Activated CD4-positive, alpha-beta memory T cell treated with anti-CD3 and anti-CD28 coated beads for 36 hours (primary cell): ENCODE measurements at regions of chr17 and their contacts with region 1.

Region 1: GRCh38 chr17:42405963-42406495 is 17.0 kb downstream of the CAVIN1 start:
- DNase-seq: peak; percentile 90
- H3K4me3 Mint-ChIP-seq: peak overlapping the region; percentile 12
- H3K27ac Mint-ChIP-seq: peak overlapping the region; percentile 8
- H3K4me1 Mint-ChIP-seq: peaks cover 16% of the 10 kb centered on the region
- H3K27me3 Mint-ChIP-seq: no peaks in the 10 kb centered on the region

Region 2: DNA sequence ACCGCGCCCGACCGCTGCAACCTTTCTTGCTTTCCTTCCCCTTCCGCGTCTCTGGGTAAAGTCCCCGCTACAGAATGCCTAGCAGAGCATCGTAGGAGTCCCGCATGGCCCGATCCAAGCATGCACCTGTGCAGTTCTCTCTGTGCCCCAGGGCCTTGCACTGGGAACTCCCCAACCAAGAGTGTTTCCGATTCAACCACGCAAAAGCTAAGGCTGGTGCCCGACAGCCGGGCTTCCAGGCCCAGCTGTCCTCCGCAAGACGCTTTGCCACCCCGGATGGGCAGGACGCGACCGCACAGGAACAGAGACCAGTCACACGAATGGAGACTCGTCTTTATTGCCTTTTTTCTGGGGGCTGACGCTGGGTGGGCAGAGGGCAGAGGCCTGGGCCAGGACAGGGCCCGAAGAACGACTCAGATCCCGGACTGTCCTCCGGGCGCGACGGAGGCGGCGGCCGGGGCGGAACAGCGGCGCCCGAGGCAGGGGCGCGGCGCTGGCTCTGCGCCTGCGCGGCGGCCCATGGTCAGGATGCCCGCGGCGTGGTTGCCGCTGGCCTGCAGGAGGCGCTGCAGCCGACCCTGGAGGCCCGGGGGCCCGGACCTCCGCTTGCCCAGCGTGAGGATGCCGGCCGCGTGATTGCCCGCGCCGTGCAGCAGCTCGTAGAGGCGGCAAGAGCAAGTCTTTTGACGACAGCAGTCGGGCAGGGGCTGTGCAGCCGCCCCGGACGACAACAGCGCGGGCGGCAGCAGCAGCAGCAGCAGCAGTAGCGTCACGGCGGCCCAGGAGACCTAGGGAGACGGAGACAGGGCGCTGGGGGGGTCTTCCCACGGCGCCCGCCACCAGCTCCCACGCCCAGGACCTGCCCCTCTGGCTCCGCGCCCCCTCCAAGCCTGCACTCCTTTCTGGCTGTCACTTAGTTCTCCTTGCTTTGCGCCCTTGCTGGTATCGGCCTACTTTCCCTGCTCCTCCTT is 222.0 kb before region 1 on chr17:
- CTCF ChIA-PET with region 1: interaction called, 6 read pairs
- POLR2A ChIA-PET with region 1: no interaction called
- intact Hi-C with region 1: loop called (anchors 2 kb)
- DNase-seq: peak; percentile 88
- H3K4me3 Mint-ChIP-seq: peak overlapping the region; percentile 80
- H3K27ac Mint-ChIP-seq: peak overlapping the region; percentile 76
- H3K4me1 Mint-ChIP-seq: peaks cover 49% of the 10 kb centered on the region
- H3K27me3 Mint-ChIP-seq: no peaks in the 10 kb centered on the region

Region 3: GRCh38 chr17:42312285-42313130 is 93.5 kb before region 1 on chr17:
- CTCF ChIA-PET with region 1: interaction called, 234 read pairs
- POLR2A ChIA-PET with region 1: interaction called, 11 read pairs
- intact Hi-C with region 1: loop called (anchors 1 kb)
- DNase-seq: peak; percentile 92
- H3K4me3 Mint-ChIP-seq: peak overlapping the region; percentile 42
- H3K27ac Mint-ChIP-seq: peak overlapping the region; percentile 74
- H3K4me1 Mint-ChIP-seq: peaks cover 76% of the 10 kb centered on the region
- H3K27me3 Mint-ChIP-seq: no peaks in the 10 kb centered on the region

Region 4: DNA sequence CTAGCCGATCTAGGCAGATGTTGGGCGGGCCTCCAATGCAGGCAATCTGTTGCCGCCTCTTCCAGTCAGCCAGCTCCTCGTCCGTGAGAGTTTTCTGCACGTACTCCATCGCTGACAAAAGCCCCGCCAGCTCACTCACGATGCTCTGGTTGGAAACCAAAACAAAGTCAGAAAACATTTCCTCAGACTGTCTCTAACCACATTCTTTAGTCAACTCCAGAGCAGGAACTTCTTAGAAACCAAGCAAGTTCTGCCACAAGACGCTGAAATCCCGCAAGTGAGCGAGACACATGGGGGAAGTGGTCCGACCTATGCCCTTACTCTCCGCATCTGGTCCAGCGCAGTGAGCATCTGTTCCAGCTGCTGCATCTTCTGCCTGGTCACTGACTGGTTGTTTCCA is 68.6 kb before region 1 on chr17:
- CTCF ChIA-PET with region 1: interaction called, 28 read pairs
- POLR2A ChIA-PET with region 1: no interaction called
- intact Hi-C with region 1: no loop called
- DNase-seq: peak; percentile 91
- H3K4me3 Mint-ChIP-seq: peak overlapping the region; percentile 60
- H3K27ac Mint-ChIP-seq: peak overlapping the region; percentile 91
- H3K4me1 Mint-ChIP-seq: peaks cover 78% of the 10 kb centered on the region
- H3K27me3 Mint-ChIP-seq: no peaks in the 10 kb centered on the region

Region 5: GRCh38 chr17:42394838-42395237 is 11.2 kb before region 1 on chr17:
- CTCF ChIA-PET with region 1: interaction called, 37 read pairs
- POLR2A ChIA-PET with region 1: interaction called, 3 read pairs
- intact Hi-C with region 1: no loop called
- DNase-seq: no peak
- H3K4me3 Mint-ChIP-seq: no peak overlapping the region
- H3K27ac Mint-ChIP-seq: no peak overlapping the region
- H3K4me1 Mint-ChIP-seq: peaks cover 25% of the 10 kb centered on the region
- H3K27me3 Mint-ChIP-seq: no peaks in the 10 kb centered on the region

Region 6: DNA sequence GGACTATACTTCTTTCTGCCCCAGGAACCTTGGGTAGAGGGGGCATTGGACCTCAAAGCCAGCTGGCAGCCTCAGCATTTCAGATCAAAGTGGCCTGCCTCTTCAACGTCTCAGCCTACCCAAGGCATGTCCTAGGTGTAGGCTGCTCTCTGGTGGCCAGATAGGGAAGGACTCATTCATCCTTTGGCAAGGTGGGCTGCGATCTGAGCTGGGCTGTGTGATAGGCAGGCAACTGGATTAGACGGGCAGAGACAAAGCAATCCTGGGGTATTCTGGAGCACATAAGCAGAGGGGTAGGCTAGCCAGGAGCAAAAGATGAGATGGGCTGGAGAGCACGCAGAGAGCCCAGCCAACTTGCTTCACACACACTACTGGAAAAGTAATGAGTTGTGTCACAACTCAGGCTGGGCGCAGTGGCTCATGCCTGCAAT is 121.3 kb after region 1 on chr17:
- CTCF ChIA-PET with region 1: interaction called, 23 read pairs
- POLR2A ChIA-PET with region 1: no interaction called
- intact Hi-C with region 1: no loop called
- DNase-seq: peak; percentile 81
- H3K4me3 Mint-ChIP-seq: no peak overlapping the region
- H3K27ac Mint-ChIP-seq: no peak overlapping the region
- H3K4me1 Mint-ChIP-seq: peaks cover 37% of the 10 kb centered on the region
- H3K27me3 Mint-ChIP-seq: peaks cover 9% of the 10 kb centered on the region

Region 7: GRCh38 chr17:42819944-42820535 is 414.0 kb after region 1 on chr17:
- CTCF ChIA-PET with region 1: no interaction called
- POLR2A ChIA-PET with region 1: no interaction called
- intact Hi-C with region 1: no loop called
- DNase-seq: peak; percentile 79
- H3K4me3 Mint-ChIP-seq: no peak overlapping the region
- H3K27ac Mint-ChIP-seq: no peak overlapping the region
- H3K4me1 Mint-ChIP-seq: peaks cover 24% of the 10 kb centered on the region
- H3K27me3 Mint-ChIP-seq: no peaks in the 10 kb centered on the region